ENCODE measurements at regions of chr20 and their contacts with region 1.

Region 1: DNA sequence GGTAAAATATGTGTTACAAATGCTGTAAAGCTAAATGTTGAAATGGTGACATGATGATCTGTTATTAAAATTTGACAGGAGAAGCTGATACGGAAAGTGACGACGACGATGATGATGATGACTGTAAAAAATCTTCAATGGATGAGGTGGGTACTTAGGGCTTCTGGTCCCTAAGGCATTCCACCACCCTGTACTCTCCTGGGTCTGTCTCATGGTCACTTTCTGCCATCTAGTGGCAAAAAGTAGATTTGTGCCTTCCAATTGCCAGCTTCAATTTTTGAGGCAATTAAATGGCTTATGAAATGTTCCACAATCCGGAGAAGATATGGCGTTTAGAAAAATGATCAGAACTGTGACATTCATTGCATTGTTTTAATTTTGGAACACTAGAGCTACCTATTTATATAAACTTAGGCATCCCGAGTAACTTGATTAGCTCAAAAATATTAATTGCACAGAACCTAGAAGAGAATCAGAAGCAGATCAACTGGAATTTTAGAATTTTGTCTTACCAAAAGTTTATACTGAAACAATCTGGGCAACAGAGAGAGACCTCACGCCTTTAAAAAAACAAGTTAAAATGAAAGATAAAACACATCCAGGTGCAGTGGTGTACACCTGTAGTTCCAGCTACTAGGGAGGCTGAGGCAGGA is 346.5 kb upstream of the PLCB4 start:
- DNase-seq: peak; percentile 72 to 83 (median 82)
- H3K4me3 ChIP-seq: no peak overlapping the region
- H3K27ac ChIP-seq: no peak overlapping the region
- H3K4me1 ChIP-seq: no peaks in the 10 kb centered on the region
- H3K27me3 ChIP-seq: no peaks in the 10 kb centered on the region

Region 2: GRCh38 chr20:7940341-7940740 is 782.1 kb before region 1 on chr20 and contains the start of gene HAO1:
- CTCF ChIA-PET with region 1: interaction called, 106 read pairs
- POLR2A ChIA-PET with region 1: no interaction called
- DNase-seq: no peak
- H3K4me3 ChIP-seq: no peak within 1 kb of the TSS
- H3K27ac ChIP-seq: no peak within 1 kb of the TSS
- H3K4me1 ChIP-seq: peaks cover 0 to 3% (median 0%) of the 10 kb centered on the region in 4 experiments
- H3K27me3 ChIP-seq: no peaks in the 10 kb centered on the region

Region 3: DNA sequence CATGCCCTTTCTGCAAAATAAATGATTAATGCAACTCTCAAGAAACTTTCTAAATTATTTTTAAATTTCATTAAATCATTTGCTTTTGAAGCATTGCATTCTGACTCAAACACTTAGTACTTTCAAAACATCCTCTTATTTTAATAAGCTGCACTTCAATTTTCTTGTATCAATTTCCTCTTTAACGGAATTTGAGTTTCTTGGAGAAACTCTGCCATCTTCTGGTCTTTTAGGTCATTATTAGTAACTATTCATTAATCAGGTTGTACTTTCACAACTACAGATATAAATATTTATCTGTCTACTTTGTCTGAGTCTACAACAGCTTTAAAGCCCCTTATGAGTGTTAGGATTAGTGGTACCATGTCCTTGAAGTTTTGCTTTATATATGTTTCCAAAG is 733.0 kb before region 1 on chr20:
- CTCF ChIA-PET with region 1: interaction called, 73 read pairs
- POLR2A ChIA-PET with region 1: no interaction called
- DNase-seq: peak in 2 of 3 donors; percentile 13 to 25
- H3K4me3 ChIP-seq: no peak overlapping the region
- H3K27ac ChIP-seq: no peak overlapping the region
- H3K4me1 ChIP-seq: peaks cover 0 to 3% (median 0%) of the 10 kb centered on the region in 4 experiments
- H3K27me3 ChIP-seq: no peaks in the 10 kb centered on the region

Region 4: DNA sequence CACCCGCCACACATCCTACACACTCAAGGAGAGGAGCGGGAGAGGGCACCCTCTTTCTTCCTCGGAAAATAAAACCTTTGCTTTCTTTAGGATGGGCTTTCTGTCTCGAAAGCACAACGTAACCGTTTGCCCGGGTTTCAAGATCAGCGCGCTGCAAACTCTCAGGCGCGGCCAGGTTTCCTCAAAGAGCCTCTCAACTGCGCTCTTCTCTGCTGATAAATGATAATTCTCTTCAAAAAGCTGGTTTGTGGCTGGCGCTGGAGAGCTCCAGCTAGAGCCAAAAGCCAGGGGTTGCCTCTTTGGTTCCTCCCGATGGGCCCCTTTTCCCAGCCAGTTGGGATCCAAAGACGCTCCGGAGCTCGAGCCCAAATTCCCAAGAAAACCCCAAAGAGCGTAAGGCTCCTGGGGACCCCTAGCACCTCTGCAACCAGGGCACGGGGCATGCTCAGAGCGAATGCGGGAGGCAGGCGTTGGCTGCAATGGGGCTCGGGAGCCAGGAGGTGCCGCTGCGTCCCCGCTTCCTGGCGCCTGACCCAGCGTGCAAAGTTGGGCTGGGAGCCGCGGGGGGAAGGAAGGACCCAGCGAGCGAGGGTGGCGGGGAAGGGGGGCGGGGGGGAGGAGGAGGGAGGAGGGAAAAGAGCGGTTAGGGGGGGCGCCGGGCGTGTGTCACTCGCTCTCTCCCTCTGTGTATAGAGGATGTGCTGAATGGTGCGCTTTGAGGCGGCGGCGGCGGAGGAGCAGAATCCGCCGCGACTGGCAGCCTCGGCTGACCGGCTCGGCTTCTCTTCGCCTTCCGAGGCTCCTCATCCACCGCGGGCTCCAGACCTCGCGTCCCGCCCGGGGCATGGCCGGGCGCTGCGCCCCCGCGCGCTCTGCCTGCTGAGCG is 590.6 kb before region 1 on chr20 and contains the start of gene PLCB1:
- CTCF ChIA-PET with region 1: interaction called, 27 read pairs
- POLR2A ChIA-PET with region 1: no interaction called
- DNase-seq: peak; percentile 89 to 95 (median 95)
- H3K4me3 ChIP-seq: peak within 1 kb of the TSS; percentile 85 to 97 (median 90)
- H3K27ac ChIP-seq: peak within 1 kb of the TSS in 1 of 2 experiments; percentile 53
- H3K4me1 ChIP-seq: peaks cover 18 to 38% (median 26%) of the 10 kb centered on the region in 4 experiments
- H3K27me3 ChIP-seq: peaks cover 0 to 3% (median 0%) of the 10 kb centered on the region in 5 experiments

Region 5: GRCh38 chr20:8711501-8711900 is 10.9 kb before region 1 on chr20:
- CTCF ChIA-PET with region 1: interaction called, 32 read pairs
- POLR2A ChIA-PET with region 1: no interaction called
- DNase-seq: peak in 1 of 3 donors; percentile 5
- H3K4me3 ChIP-seq: no peak overlapping the region
- H3K27ac ChIP-seq: no peak overlapping the region
- H3K4me1 ChIP-seq: no peaks in the 10 kb centered on the region
- H3K27me3 ChIP-seq: no peaks in the 10 kb centered on the region